SK-N-SH (cell line): ENCODE measurements at regions of chr7 and their contacts with region 1.

Region 1: DNA sequence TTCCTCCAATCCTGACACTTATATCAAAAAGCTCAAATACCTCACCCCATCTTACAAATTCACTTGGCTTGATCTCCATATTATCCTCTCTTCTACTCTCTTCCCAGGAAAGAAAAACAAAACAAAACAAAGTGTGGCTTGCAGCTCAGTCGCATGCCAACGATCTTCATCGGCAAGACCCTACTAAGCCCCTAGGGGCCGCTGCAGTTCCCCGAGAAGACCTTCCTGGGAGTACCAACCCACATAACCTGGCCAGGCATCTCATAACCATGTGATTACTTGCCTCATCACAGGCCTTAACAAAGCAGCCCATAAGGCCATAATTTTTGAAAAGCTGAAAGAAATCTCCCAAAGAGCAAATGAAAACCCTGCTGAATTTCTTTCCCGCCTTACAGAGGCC is 103.7 kb downstream of the ZNF92 start:
- DNase-seq: peak; percentile 67
- H3K4me3 ChIP-seq: no peak overlapping the region
- H3K27ac ChIP-seq: no peak overlapping the region
- H3K4me1 ChIP-seq: no peaks in the 10 kb centered on the region
- H3K27me3 ChIP-seq: peaks cover 18% of the 10 kb centered on the region; the same call in 1 of the 2 replicates
- CTCF ChIP-seq: peak; percentile 69
- EP300 ChIP-seq: no peak
- RAD21 ChIP-seq: peak; percentile 75

Region 2: DNA sequence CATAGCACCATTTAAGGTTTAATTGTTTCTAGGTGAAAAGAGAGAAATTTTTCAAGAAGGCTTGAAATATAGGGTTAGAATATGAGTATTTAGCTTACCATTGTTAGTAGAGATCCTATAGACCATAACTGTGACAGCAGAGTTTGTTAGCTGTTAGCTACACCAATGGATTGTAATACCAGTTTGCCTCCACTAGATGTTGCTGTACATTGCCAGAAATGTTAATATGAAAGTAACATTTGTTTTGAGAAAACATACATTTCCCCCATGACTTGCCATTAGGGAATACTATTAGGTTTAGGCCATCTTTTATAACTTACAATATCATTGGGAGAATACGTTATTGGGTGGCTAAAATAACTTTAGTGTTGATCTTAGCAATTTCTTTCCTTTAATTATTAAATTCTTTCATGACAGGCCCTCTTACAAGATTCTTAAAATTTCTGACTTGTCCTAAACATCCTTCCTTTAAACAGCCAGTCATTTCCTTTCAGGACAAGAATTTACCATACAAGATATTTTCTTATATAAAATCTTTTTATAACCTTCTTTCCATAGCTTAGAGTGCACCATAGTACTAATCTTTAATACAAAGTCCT is 526.0 kb before region 1 on chr7:
- CTCF ChIA-PET with region 1: interaction called, 21 read pairs
- POLR2A ChIA-PET with region 1: no interaction called
- DNase-seq: peak; percentile 66
- H3K4me3 ChIP-seq: no peak overlapping the region; a peak in 1 of 4 replicates
- H3K27ac ChIP-seq: no peak overlapping the region
- H3K4me1 ChIP-seq: peaks cover 0 to 18% of the 10 kb centered on the region in 2 experiments; a peak in 2 of 4 replicates
- H3K27me3 ChIP-seq: peaks cover 18% of the 10 kb centered on the region
- CTCF ChIP-seq: peak; percentile 96
- EP300 ChIP-seq: no peak
- RAD21 ChIP-seq: peak; percentile 95

Region 3: GRCh38 chr7:65454469-65454868 is 22.9 kb before region 1 on chr7:
- CTCF ChIA-PET with region 1: interaction called, 10 read pairs
- POLR2A ChIA-PET with region 1: no interaction called
- DNase-seq: no peak
- H3K4me3 ChIP-seq: no peak overlapping the region
- H3K27ac ChIP-seq: no peak overlapping the region
- H3K4me1 ChIP-seq: peaks cover 0 to 3% of the 10 kb centered on the region in 2 experiments; a peak in 1 of 4 replicates
- H3K27me3 ChIP-seq: peaks cover 14% of the 10 kb centered on the region; the same call in 1 of the 2 replicates
- CTCF ChIP-seq: no peak
- EP300 ChIP-seq: no peak
- RAD21 ChIP-seq: no peak

Region 4: GRCh38 chr7:65463184-65463583 is 14.1 kb before region 1 on chr7:
- CTCF ChIA-PET with region 1: interaction called, 17 read pairs
- POLR2A ChIA-PET with region 1: no interaction called
- DNase-seq: no peak
- H3K4me3 ChIP-seq: no peak overlapping the region
- H3K27ac ChIP-seq: no peak overlapping the region
- H3K4me1 ChIP-seq: no peaks in the 10 kb centered on the region
- H3K27me3 ChIP-seq: peaks cover 14% of the 10 kb centered on the region; the same call in 1 of the 2 replicates
- CTCF ChIP-seq: no peak
- EP300 ChIP-seq: no peak
- RAD21 ChIP-seq: no peak